ENCODE measurements at regions of chr10 and their contacts with region 1.

Region 1: DNA sequence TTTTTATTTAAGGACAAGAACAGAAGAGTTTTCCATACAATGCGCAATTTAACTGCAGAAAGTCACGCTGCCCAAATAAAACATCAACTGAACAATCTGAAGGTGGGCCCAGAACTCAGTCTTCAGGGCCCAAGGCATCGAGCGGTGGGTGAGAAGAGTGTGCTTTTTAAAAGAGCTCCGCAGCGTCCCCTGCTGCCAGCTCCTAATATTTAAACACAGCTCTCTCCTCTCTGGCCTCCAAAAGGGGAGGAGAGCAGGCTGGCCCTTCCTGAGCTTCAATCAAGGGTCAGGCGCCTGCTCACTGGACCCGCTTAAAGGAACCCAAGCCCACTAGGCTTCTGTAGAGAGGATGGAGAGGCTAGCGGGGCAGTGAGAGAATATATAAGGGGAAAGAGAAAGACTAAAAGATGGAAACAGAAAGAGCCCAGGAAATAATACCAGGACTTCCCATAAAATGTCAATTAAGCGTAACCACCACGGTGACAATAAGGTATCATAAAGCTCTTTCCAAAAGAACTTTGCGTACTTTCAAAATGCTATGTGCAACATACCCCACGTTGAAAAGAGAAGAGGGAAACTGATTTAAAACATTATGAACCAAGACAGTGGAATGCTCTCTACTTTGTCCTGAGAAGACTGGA is 2.8 kb downstream of the FAM53B start:
- DNase-seq: peak; percentile 86
- ATAC-seq: peak; percentile 51
- H3K4me3 ChIP-seq: peak overlapping the region; percentile 66 to 92 (median 78)
- H3K4me3 Mint-ChIP-seq: peak overlapping the region; percentile 93
- H3K27ac ChIP-seq: peak overlapping the region; percentile 79 to 98
- H3K27ac Mint-ChIP-seq: peak overlapping the region; percentile 98
- H3K4me1 ChIP-seq: peaks cover 60 to 73% of the 10 kb centered on the region in 2 donors
- H3K4me1 Mint-ChIP-seq: peaks cover 73% of the 10 kb centered on the region
- H3K27me3 ChIP-seq: no peaks in the 10 kb centered on the region
- H3K27me3 Mint-ChIP-seq: no peaks in the 10 kb centered on the region
- CTCF ChIP-seq: peak; percentile 95

Region 2: GRCh38 chr10:124092860-124093773 is 648.3 kb before region 1 on chr10 and contains the start of gene CHST15:
- CTCF ChIA-PET with region 1: no interaction called
- POLR2A ChIA-PET with region 1: no interaction called
- intact Hi-C with region 1: loop called (anchors 10 kb)
- DNase-seq: peak; percentile 82
- ATAC-seq: peak; percentile 39
- H3K4me3 ChIP-seq: peak within 1 kb of the TSS; percentile 58 to 85 (median 80)
- H3K4me3 Mint-ChIP-seq: peak within 1 kb of the TSS; percentile 98
- H3K27ac ChIP-seq: peak within 1 kb of the TSS; percentile 71 to 97
- H3K27ac Mint-ChIP-seq: peak within 1 kb of the TSS; percentile 90
- H3K4me1 ChIP-seq: peaks cover 29 to 33% of the 10 kb centered on the region in 2 donors
- H3K4me1 Mint-ChIP-seq: peaks cover 57% of the 10 kb centered on the region
- H3K27me3 ChIP-seq: no peaks in the 10 kb centered on the region
- H3K27me3 Mint-ChIP-seq: no peaks in the 10 kb centered on the region
- CTCF ChIP-seq: no peak
- total RNA-seq, gene CHST15: 72.0 and 75.4 TPM in 2 replicates

Region 3: GRCh38 chr10:124522933-124523871 is 218.2 kb before region 1 on chr10:
- CTCF ChIA-PET with region 1: interaction called, 415 read pairs
- POLR2A ChIA-PET with region 1: no interaction called
- intact Hi-C with region 1: no loop called
- DNase-seq: peak; percentile 58
- ATAC-seq: peak; percentile 72
- H3K4me3 ChIP-seq: peak overlapping the region in 3 of 5 experiments; percentile 3 to 37 (median 11)
- H3K4me3 Mint-ChIP-seq: peak overlapping the region; percentile 73
- H3K27ac ChIP-seq: no peak overlapping the region
- H3K27ac Mint-ChIP-seq: peak overlapping the region; percentile 74
- H3K4me1 ChIP-seq: peaks cover 9 to 16% of the 10 kb centered on the region in 2 donors
- H3K4me1 Mint-ChIP-seq: peaks cover 19% of the 10 kb centered on the region
- H3K27me3 ChIP-seq: no peaks in the 10 kb centered on the region
- H3K27me3 Mint-ChIP-seq: no peaks in the 10 kb centered on the region
- CTCF ChIP-seq: no peak

Region 4: GRCh38 chr10:124601431-124602120 is 139.8 kb before region 1 on chr10:
- CTCF ChIA-PET with region 1: interaction called, 38 read pairs
- POLR2A ChIA-PET with region 1: interaction called, 11 read pairs
- intact Hi-C with region 1: loop called (anchors 1 kb)
- DNase-seq: peak; percentile 96
- ATAC-seq: peak; percentile 85
- H3K4me3 ChIP-seq: peak overlapping the region in 2 of 5 experiments; percentile 5 to 18
- H3K4me3 Mint-ChIP-seq: peak overlapping the region; percentile 52
- H3K27ac ChIP-seq: peak overlapping the region; percentile 90 to 99
- H3K27ac Mint-ChIP-seq: peak overlapping the region; percentile 99
- H3K4me1 ChIP-seq: peaks cover 98 to 100% of the 10 kb centered on the region in 2 donors
- H3K4me1 Mint-ChIP-seq: peaks cover 94% of the 10 kb centered on the region
- H3K27me3 ChIP-seq: no peaks in the 10 kb centered on the region
- H3K27me3 Mint-ChIP-seq: no peaks in the 10 kb centered on the region
- CTCF ChIP-seq: no peak

Region 5: DNA sequence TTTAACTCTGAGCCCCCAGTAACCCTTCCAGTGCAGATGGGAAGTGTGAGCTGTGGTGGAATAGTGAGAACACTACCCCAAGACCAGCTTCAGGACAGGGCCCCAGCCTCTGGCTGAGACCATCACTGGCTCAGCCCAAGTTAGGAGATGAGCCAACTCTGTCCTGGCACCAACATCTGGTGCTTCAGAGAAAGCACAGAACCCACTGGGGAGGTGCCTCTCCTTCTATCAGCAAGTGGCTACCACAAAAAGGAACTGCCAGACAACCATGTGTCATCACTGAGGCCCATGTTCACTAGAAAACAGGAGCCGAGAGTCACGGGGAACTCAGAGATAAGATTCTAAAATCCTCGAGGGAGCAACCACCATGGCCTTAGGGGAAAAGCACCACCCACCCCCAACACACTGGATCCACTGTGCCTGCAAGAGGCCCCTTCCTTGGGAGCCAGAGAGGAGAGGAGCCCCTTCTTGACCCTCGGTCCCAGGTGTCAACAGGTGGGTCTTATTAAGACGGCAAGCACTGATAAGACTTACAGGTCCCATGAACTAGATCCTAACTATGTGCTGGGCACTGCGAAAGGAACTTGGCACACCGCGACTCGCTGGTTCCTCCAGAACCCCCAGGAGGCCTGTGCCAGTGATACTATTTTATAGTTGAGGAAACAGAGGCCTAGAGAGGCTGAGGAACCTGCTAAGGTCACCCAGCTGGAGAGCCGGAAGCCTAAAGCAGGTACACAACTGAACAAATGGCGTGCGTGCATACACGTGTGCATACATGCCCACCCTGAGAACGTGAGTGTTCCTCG is 99.9 kb before region 1 on chr10:
- CTCF ChIA-PET with region 1: interaction called, 59 read pairs
- POLR2A ChIA-PET with region 1: interaction called, 7 read pairs
- intact Hi-C with region 1: loop called (anchors 2 kb)
- DNase-seq: peak; percentile 81
- ATAC-seq: peak; percentile 76
- H3K4me3 ChIP-seq: peak overlapping the region in 4 of 5 experiments; percentile 18 to 37 (median 20)
- H3K4me3 Mint-ChIP-seq: peak overlapping the region; percentile 83
- H3K27ac ChIP-seq: peak overlapping the region; percentile 86 to 92
- H3K27ac Mint-ChIP-seq: peak overlapping the region; percentile 94
- H3K4me1 ChIP-seq: peaks cover 99 to 100% of the 10 kb centered on the region in 2 donors
- H3K4me1 Mint-ChIP-seq: peaks cover 99% of the 10 kb centered on the region
- H3K27me3 ChIP-seq: no peaks in the 10 kb centered on the region
- H3K27me3 Mint-ChIP-seq: no peaks in the 10 kb centered on the region
- CTCF ChIP-seq: no peak

Region 6: GRCh38 chr10:124697830-124698544 is 43.4 kb before region 1 on chr10:
- CTCF ChIA-PET with region 1: interaction called, 30 read pairs
- POLR2A ChIA-PET with region 1: interaction called, 3 read pairs
- intact Hi-C with region 1: loop called (anchors 1 kb)
- DNase-seq: peak; percentile 73
- ATAC-seq: peak; percentile 40
- H3K4me3 ChIP-seq: peak overlapping the region in 1 of 5 experiments; percentile 7
- H3K4me3 Mint-ChIP-seq: peak overlapping the region; percentile 86
- H3K27ac ChIP-seq: peak overlapping the region; percentile 80 to 91
- H3K27ac Mint-ChIP-seq: peak overlapping the region; percentile 97
- H3K4me1 ChIP-seq: peaks cover 88 to 93% of the 10 kb centered on the region in 2 donors
- H3K4me1 Mint-ChIP-seq: peaks cover 96% of the 10 kb centered on the region
- H3K27me3 ChIP-seq: no peaks in the 10 kb centered on the region
- H3K27me3 Mint-ChIP-seq: no peaks in the 10 kb centered on the region
- CTCF ChIP-seq: no peak

Region 7: DNA sequence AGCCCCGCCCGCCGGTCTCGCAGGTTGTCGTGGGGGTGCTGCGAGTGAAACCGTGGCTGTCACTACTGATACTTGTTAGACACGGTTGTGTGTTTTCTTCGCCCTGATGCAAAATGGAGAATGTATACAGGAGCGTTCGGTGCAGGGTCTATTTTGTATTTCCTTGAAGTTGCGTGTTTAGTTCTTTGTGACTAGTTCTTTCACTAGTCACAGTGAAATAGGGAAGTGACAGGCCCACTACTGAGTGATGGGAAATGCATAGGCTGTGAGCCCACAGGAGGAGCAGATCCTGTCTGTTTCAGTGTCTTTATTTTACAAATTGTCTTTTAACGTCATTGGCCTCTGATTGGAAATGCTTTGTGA is 60.9 kb after region 1 on chr10:
- CTCF ChIA-PET with region 1: interaction called, 3 read pairs
- POLR2A ChIA-PET with region 1: no interaction called
- intact Hi-C with region 1: loop called (anchors 2 kb)
- DNase-seq: peak; percentile 65
- ATAC-seq: peak; percentile 14
- H3K4me3 ChIP-seq: peak overlapping the region; percentile 69 to 97 (median 81)
- H3K4me3 Mint-ChIP-seq: peak overlapping the region; percentile 94
- H3K27ac ChIP-seq: peak overlapping the region; percentile 71 to 89
- H3K27ac Mint-ChIP-seq: peak overlapping the region; percentile 93
- H3K4me1 ChIP-seq: peaks cover 5 to 13% of the 10 kb centered on the region in 2 donors
- H3K4me1 Mint-ChIP-seq: peaks cover 17% of the 10 kb centered on the region
- H3K27me3 ChIP-seq: peaks cover 0 to 3% (median 0%) of the 10 kb centered on the region in 4 experiments
- H3K27me3 Mint-ChIP-seq: peaks cover 4% of the 10 kb centered on the region
- CTCF ChIP-seq: no peak

Region 8: GRCh38 chr10:124827474-124827873 is 86.1 kb after region 1 on chr10:
- CTCF ChIA-PET with region 1: no interaction called
- POLR2A ChIA-PET with region 1: no interaction called
- intact Hi-C with region 1: no loop called
- DNase-seq: peak; percentile 30
- ATAC-seq: no peak
- H3K4me3 ChIP-seq: no peak overlapping the region
- H3K4me3 Mint-ChIP-seq: no peak overlapping the region
- H3K27ac ChIP-seq: no peak overlapping the region
- H3K27ac Mint-ChIP-seq: no peak overlapping the region
- H3K4me1 ChIP-seq: no peaks in the 10 kb centered on the region
- H3K4me1 Mint-ChIP-seq: no peaks in the 10 kb centered on the region
- H3K27me3 ChIP-seq: no peaks in the 10 kb centered on the region
- H3K27me3 Mint-ChIP-seq: no peaks in the 10 kb centered on the region
- CTCF ChIP-seq: peak; percentile 81

Region 9: GRCh38 chr10:124842721-124843120 is 101.3 kb after region 1 on chr10:
- CTCF ChIA-PET with region 1: no interaction called
- POLR2A ChIA-PET with region 1: no interaction called
- intact Hi-C with region 1: no loop called
- DNase-seq: no peak
- ATAC-seq: no peak
- H3K4me3 ChIP-seq: no peak overlapping the region
- H3K4me3 Mint-ChIP-seq: no peak overlapping the region
- H3K27ac ChIP-seq: no peak overlapping the region
- H3K27ac Mint-ChIP-seq: no peak overlapping the region
- H3K4me1 ChIP-seq: no peaks in the 10 kb centered on the region
- H3K4me1 Mint-ChIP-seq: no peaks in the 10 kb centered on the region
- H3K27me3 ChIP-seq: no peaks in the 10 kb centered on the region
- H3K27me3 Mint-ChIP-seq: peaks cover 4% of the 10 kb centered on the region
- CTCF ChIP-seq: no peak

Region 10: DNA sequence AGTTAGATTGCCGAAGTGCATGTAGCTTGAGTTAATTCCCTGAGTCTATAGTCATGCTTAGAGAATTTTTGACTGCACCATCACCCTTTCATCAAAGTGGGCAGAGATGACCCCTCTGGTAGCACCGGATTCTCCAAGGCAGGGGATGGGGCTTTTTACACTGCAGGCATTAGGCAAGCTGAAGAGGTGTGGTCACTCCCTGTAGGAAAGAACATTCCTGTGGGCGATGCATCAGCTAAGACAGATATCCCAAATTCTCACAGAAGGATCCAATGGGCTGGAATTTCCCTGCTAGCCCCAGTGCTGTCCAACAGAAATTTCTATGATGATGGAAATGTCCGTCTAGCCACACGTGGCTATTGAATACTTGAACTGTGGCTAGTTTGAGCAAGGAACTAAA is 1528.7 kb after region 1 on chr10:
- CTCF ChIA-PET with region 1: no interaction called
- POLR2A ChIA-PET with region 1: no interaction called
- intact Hi-C with region 1: no loop called
- DNase-seq: no peak
- ATAC-seq: no peak
- H3K4me3 ChIP-seq: no peak overlapping the region
- H3K4me3 Mint-ChIP-seq: no peak overlapping the region
- H3K27ac ChIP-seq: no peak overlapping the region
- H3K27ac Mint-ChIP-seq: no peak overlapping the region
- H3K4me1 ChIP-seq: no peaks in the 10 kb centered on the region
- H3K4me1 Mint-ChIP-seq: no peaks in the 10 kb centered on the region
- H3K27me3 ChIP-seq: no peaks in the 10 kb centered on the region
- H3K27me3 Mint-ChIP-seq: no peaks in the 10 kb centered on the region
- CTCF ChIP-seq: no peak